Ovary (tissue), 10 donors: ENCODE measurements at regions of chr18 and their contacts with region 1.

Region 1: GRCh38 chr18:12376718-12377555 is at the start of gene AFG3L2:
- DNase-seq: peak; percentile 100
- H3K4me3 ChIP-seq: peak within 1 kb of the TSS; percentile 49
- H3K27ac ChIP-seq: peak within 1 kb of the TSS; percentile 94 to 100
- H3K4me1 ChIP-seq: peaks cover 14% of the 10 kb centered on the region
- H3K27me3 ChIP-seq: no peaks in the 10 kb centered on the region
- CTCF ChIP-seq: peak in 1 of 3 donors; percentile 6
- EP300 ChIP-seq: peak; percentile 43
- POLR2A ChIP-seq: peak; percentile 98
- total RNA-seq, gene AFG3L2: 28.7 to 42.5 (median 36.3) TPM

Region 2: GRCh38 chr18:12271376-12272235 is 105.3 kb before region 1 on chr18:
- intact Hi-C with region 1: loop called in 2 of 4 experiments (anchors 10 kb)
- DNase-seq: peak; percentile 78 to 91 (median 83)
- H3K4me3 ChIP-seq: peak overlapping the region; percentile 46
- H3K27ac ChIP-seq: peak overlapping the region in 1 of 2 donors; percentile 47
- H3K4me1 ChIP-seq: no peaks in the 10 kb centered on the region
- H3K27me3 ChIP-seq: no peaks in the 10 kb centered on the region
- CTCF ChIP-seq: peak; percentile 52 to 94 (median 81)
- EP300 ChIP-seq: peak; percentile 34
- POLR2A ChIP-seq: peak; percentile 17

Region 3: GRCh38 chr18:12314591-12315305 is 62.2 kb before region 1 on chr18:
- intact Hi-C with region 1: no loop called
- DNase-seq: no peak
- H3K4me3 ChIP-seq: no peak overlapping the region
- H3K27ac ChIP-seq: no peak overlapping the region
- H3K4me1 ChIP-seq: peaks cover 4% of the 10 kb centered on the region
- H3K27me3 ChIP-seq: no peaks in the 10 kb centered on the region
- CTCF ChIP-seq: no peak
- EP300 ChIP-seq: no peak
- POLR2A ChIP-seq: no peak

Region 4: GRCh38 chr18:12327510-12328178 is 49.3 kb before region 1 on chr18:
- intact Hi-C with region 1: loop called in 1 of 4 experiments (anchors 10 kb)
- DNase-seq: peak; percentile 57 to 76 (median 69)
- H3K4me3 ChIP-seq: no peak overlapping the region
- H3K27ac ChIP-seq: no peak overlapping the region
- H3K4me1 ChIP-seq: no peaks in the 10 kb centered on the region
- H3K27me3 ChIP-seq: no peaks in the 10 kb centered on the region
- CTCF ChIP-seq: peak in 2 of 3 donors; percentile 27 to 43
- EP300 ChIP-seq: no peak
- POLR2A ChIP-seq: no peak